GM23248 (cell line): ENCODE measurements at regions of chr3 and their contacts with region 1.

Region 1: DNA sequence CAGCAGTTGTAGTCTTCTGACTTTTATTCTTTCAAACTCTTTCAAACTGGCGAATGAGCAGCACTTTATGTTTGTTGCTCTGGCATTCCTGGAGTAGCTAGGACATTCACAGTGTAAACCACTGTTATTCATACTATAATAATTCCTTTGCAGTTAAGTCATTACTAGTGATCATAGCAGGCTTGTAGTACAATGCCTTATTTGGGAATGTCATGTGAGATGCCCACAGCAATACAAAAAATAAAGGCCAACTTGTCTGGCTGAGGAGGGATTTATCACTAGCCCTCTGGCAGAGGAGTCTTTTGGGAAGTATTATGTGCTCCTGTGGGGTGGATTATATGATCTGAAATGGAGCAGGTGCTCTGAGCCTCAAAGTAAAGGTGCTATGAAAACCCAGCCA is 197.2 kb downstream of the VGLL3 start:
- DNase-seq: peak; percentile 94
- H3K4me3 ChIP-seq: peak overlapping the region; percentile 66
- H3K27ac ChIP-seq: peak overlapping the region; percentile 80
- H3K4me1 ChIP-seq: peaks cover 27% of the 10 kb centered on the region
- H3K27me3 ChIP-seq: no peaks in the 10 kb centered on the region

Region 2: DNA sequence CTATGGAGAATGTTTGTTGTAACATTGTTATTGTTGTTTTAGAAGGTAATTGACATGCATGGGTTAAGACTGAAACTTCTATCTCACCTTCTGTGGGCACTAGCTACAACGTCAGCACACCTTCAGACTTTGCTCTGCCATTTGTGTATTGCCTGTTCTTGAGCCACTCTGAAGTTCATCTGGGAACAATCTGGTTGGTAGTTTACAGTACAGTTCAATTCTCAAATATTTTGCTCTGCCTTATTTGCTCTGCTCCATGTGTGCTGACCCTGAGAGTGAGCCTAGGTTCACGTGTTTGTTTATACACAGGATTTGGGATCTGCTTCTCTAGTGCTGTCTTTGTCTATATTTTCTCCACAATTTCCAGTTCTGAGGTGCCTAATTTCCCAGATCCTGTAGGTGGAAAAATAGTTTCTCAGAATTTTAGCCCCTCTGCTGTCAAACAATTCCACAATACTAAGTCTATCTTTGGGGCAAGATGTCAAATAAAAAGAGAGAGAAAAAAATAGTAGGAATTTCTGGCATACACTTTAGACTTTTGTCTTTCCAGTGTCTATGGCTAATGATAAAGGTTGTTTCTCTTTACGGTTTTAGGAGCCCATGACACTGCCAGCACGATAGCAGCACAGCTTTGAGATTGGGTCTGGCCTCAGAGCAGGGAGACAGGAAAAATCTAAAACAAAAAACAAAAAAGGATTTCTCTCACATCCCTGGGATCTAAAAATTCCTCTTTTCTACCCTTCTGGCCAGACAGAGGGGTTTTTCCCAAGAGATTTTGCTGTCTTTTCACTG is 524.2 kb before region 1 on chr3:
- in situ Hi-C with region 1: no loop called
- DNase-seq: no peak
- H3K4me3 ChIP-seq: no peak overlapping the region
- H3K27ac ChIP-seq: no peak overlapping the region
- H3K4me1 ChIP-seq: no peaks in the 10 kb centered on the region
- H3K27me3 ChIP-seq: no peaks in the 10 kb centered on the region

Region 3: GRCh38 chr3:86723433-86723832 is 70.4 kb before region 1 on chr3:
- in situ Hi-C with region 1: no loop called
- DNase-seq: no peak
- H3K4me3 ChIP-seq: no peak overlapping the region
- H3K27ac ChIP-seq: no peak overlapping the region
- H3K4me1 ChIP-seq: no peaks in the 10 kb centered on the region
- H3K27me3 ChIP-seq: no peaks in the 10 kb centered on the region

Region 4: DNA sequence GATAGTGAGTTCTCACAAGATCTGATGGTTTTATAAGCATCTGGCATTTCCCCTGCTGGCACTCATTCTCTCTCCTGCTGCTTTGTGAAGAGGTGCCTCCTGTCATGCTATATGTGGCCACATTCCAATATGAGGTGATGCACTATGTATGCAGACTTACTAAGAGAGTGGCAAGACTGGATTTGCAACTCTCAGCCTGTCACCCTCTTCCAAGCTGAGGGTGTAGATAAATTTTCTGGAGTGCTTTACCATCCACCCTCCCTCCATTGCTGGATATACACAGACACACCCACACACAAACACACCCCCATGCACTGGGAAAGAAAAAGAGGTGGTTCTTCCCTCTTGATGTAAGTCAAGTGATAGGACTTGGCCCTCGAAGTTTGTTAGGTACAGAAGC is 403.1 kb after region 1 on chr3:
- in situ Hi-C with region 1: loop called (anchors 25 kb)
- DNase-seq: no peak
- H3K4me3 ChIP-seq: no peak overlapping the region
- H3K27ac ChIP-seq: no peak overlapping the region
- H3K4me1 ChIP-seq: peaks cover 12% of the 10 kb centered on the region
- H3K27me3 ChIP-seq: no peaks in the 10 kb centered on the region

Region 5: DNA sequence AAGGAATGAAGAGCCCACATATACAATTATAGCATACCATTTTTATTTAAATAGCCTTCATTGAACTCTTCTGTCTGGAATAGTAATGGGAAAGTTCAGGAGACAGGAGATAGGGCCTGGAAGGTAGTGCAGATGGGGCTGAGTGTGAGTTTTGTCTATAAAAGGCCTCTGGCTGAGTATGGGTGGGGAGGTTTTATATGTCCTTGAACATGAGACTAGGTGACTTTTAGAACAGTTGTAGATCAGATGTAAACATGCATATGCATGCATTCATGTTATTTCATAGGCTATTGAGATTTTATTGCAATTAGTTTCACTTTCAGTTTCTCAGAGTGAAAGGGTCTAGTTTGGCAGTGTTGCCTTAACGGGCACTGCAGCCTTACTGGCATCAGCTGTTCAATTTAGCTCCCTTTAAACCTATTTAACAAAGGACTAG is 1237.9 kb after region 1 on chr3:
- in situ Hi-C with region 1: loop called (anchors 25 kb)
- DNase-seq: peak; percentile 66
- H3K4me3 ChIP-seq: peak overlapping the region; percentile 77
- H3K27ac ChIP-seq: peak overlapping the region; percentile 47
- H3K4me1 ChIP-seq: peaks cover 16% of the 10 kb centered on the region
- H3K27me3 ChIP-seq: no peaks in the 10 kb centered on the region